ENCODE measurements at regions of chr11 and their contacts with region 1.

Region 1: GRCh38 chr11:108121274-108122155 is at the start of gene ACAT1:
- DNase-seq: peak; percentile 96
- H3K4me3 Mint-ChIP-seq: peak within 1 kb of the TSS; percentile 85
- H3K27ac Mint-ChIP-seq: peak within 1 kb of the TSS; percentile 16
- H3K4me1 Mint-ChIP-seq: peaks cover 40% of the 10 kb centered on the region
- H3K27me3 Mint-ChIP-seq: no peaks in the 10 kb centered on the region
- total RNA-seq, gene ACAT1: 54.9 to 55.0 TPM

Region 2: GRCh38 chr11:107840129-107840484 is 281.4 kb before region 1 on chr11:
- CTCF ChIA-PET with region 1: no interaction called
- intact Hi-C with region 1: loop called (anchors 5 kb)
- DNase-seq: no peak
- H3K4me3 Mint-ChIP-seq: no peak overlapping the region
- H3K27ac Mint-ChIP-seq: peak overlapping the region; percentile 93
- H3K4me1 Mint-ChIP-seq: peaks cover 68% of the 10 kb centered on the region
- H3K27me3 Mint-ChIP-seq: no peaks in the 10 kb centered on the region

Region 3: GRCh38 chr11:108199446-108200321 is 78.2 kb after region 1 on chr11:
- CTCF ChIA-PET with region 1: interaction called, 3 read pairs
- intact Hi-C with region 1: loop called (anchors 1 kb)
- DNase-seq: peak; percentile 94
- H3K4me3 Mint-ChIP-seq: no peak overlapping the region
- H3K27ac Mint-ChIP-seq: peak overlapping the region; percentile 48
- H3K4me1 Mint-ChIP-seq: peaks cover 86% of the 10 kb centered on the region
- H3K27me3 Mint-ChIP-seq: no peaks in the 10 kb centered on the region

Region 4: DNA sequence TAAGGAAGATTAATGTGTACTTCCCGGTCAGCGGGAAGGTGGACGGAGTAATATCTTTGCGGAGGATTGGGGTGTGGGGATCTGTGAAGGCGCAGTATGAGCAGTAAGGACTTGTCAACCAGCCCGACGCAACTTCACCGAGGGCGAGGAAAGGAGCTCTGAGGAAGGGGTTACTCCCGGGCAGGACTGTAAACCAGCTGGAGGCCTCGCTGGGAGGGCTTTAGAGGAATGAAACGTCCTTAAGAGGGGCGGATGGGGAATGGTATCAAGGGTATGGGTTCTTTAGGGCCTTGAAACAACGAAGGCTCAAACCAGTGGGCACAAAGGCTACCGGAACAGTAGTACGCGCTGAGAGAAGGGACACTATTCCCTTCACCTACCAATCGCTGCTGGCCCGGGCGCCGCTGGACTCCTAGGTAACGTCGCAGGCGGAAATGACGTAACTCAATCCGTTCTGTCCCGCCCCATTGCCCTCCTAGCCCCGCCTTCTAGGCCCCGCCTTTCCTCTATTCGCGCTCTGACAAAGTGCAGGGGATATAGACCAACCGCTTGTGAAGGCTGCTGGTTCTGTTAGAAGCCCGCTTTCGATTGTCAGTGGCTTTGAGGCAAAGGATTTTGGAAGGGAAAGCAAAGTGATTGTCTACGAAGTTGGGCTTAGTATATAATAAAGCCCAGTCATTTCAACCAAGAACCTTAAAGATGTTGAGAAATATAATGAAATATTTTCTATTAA is 345.7 kb after region 1 on chr11 and contains the start of gene C11orf65:
- CTCF ChIA-PET with region 1: no interaction called
- intact Hi-C with region 1: loop called (anchors 1 kb)
- DNase-seq: peak; percentile 98
- H3K4me3 Mint-ChIP-seq: peak within 1 kb of the TSS; percentile 94
- H3K27ac Mint-ChIP-seq: peak within 1 kb of the TSS; percentile 96
- H3K4me1 Mint-ChIP-seq: peaks cover 8% of the 10 kb centered on the region
- H3K27me3 Mint-ChIP-seq: no peaks in the 10 kb centered on the region
- total RNA-seq, gene C11orf65: 2.2 to 3.1 TPM

Region 5: DNA sequence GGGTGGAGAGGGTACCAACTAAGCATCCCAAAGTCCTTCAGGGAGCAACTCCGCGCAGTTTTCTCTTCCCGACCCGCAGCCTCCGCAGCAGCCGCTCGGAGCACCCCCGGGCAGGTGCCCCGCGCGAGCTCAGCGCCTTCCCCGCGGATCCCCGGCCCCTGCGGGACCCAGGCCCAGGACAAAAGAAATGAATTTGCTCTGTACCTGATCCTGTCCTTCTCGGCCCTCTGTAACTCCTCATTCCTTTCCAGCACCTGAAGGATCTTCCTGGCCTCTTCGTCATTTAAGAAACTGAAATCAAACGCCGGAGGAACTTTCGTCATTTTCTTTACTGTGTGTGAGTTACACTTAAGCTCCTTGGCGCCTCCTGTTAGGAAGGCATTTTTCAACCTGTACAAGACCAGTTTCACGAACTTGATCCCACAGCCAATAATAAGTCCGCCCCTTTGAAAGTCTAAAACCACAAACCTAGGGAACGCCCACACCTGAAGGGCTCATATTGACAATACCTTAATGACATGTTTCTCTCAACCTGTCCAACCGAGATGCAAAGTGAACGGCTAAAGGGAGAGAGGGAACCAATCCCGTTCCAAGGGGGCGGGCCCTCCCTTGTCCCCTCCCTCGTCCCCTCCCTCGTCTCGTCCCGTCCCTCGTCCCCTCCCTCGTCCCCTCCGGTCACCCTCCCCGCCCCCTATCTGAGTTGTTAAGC is 471.9 kb after region 1 on chr11 and contains the start of gene EXPH5:
- CTCF ChIA-PET with region 1: no interaction called
- intact Hi-C with region 1: loop called (anchors 1 kb)
- DNase-seq: peak; percentile 95
- H3K4me3 Mint-ChIP-seq: peak within 1 kb of the TSS; percentile 88
- H3K27ac Mint-ChIP-seq: peak within 1 kb of the TSS; percentile 54
- H3K4me1 Mint-ChIP-seq: peaks cover 13% of the 10 kb centered on the region
- H3K27me3 Mint-ChIP-seq: peaks cover 3% of the 10 kb centered on the region
- total RNA-seq, gene EXPH5: 2.9 to 3.3 TPM

Region 6: GRCh38 chr11:108654994-108655631 is 533.6 kb after region 1 on chr11:
- CTCF ChIA-PET with region 1: interaction called, 8 read pairs
- intact Hi-C with region 1: loop called (anchors 1 kb)
- DNase-seq: peak; percentile 72
- H3K4me3 Mint-ChIP-seq: no peak overlapping the region
- H3K27ac Mint-ChIP-seq: no peak overlapping the region
- H3K4me1 Mint-ChIP-seq: no peaks in the 10 kb centered on the region
- H3K27me3 Mint-ChIP-seq: no peaks in the 10 kb centered on the region

Region 7: GRCh38 chr11:108853864-108854263 is 732.3 kb after region 1 on chr11:
- CTCF ChIA-PET with region 1: no interaction called
- intact Hi-C with region 1: loop called (anchors 10 kb)
- DNase-seq: peak; percentile 11
- H3K4me3 Mint-ChIP-seq: peak overlapping the region; percentile 67
- H3K27ac Mint-ChIP-seq: peak overlapping the region; percentile 82
- H3K4me1 Mint-ChIP-seq: peaks cover 19% of the 10 kb centered on the region
- H3K27me3 Mint-ChIP-seq: no peaks in the 10 kb centered on the region